ENCODE measurements at regions of chr9 and their contacts with region 1.

Region 1: GRCh38 chr9:116737152-116737546 is 50.0 kb downstream of the TRIM32 start:
- DNase-seq: peak; percentile 79 to 92
- ATAC-seq: peak; percentile 87 to 98
- H3K4me3 ChIP-seq: no peak overlapping the region
- H3K27ac ChIP-seq: no peak overlapping the region
- H3K4me1 ChIP-seq: no peaks in the 10 kb centered on the region
- CTCF ChIP-seq: peak; percentile 91
- EP300 ChIP-seq: no peak
- POLR2A ChIP-seq: no peak
- RAD21 ChIP-seq: peak; percentile 93

Region 2: GRCh38 chr9:116414374-116414773 is 322.8 kb before region 1 on chr9:
- CTCF ChIA-PET with region 1: no interaction called
- POLR2A ChIA-PET with region 1: no interaction called
- DNase-seq: no peak
- ATAC-seq: no peak
- H3K4me3 ChIP-seq: no peak overlapping the region
- H3K27ac ChIP-seq: no peak overlapping the region
- H3K4me1 ChIP-seq: no peaks in the 10 kb centered on the region
- CTCF ChIP-seq: no peak
- EP300 ChIP-seq: no peak
- POLR2A ChIP-seq: no peak
- RAD21 ChIP-seq: no peak

Region 3: DNA sequence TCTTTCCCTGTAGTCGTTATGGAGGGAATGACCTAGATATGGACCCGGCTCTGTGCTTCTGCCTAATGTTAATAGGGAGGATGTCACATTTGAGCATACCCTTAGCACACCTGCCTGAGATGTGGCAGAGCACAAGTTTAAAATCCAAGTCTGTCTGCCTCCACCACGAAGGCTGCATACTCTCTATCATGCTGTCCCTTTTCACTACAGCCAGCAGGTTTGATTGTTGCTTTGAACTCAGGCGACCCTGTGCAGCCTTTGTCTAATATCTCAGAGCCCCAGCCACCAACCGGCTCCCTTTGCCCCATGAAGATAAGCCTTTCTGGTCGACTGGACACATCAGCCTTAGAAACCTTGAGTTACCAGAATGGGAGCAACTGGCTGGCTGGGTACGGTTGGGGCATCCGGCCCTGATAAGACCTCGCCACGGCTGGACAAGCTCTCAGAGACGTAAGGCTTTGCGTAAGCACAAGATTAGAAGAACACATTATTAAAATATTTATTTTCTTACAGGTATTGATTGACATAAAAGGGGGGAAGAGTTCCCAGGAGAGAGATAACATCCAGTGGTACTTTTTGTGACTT is 272.1 kb before region 1 on chr9:
- CTCF ChIA-PET with region 1: no interaction called
- POLR2A ChIA-PET with region 1: no interaction called
- DNase-seq: no peak
- ATAC-seq: no peak
- H3K4me3 ChIP-seq: no peak overlapping the region
- H3K27ac ChIP-seq: no peak overlapping the region
- H3K4me1 ChIP-seq: no peaks in the 10 kb centered on the region
- CTCF ChIP-seq: no peak
- EP300 ChIP-seq: no peak
- POLR2A ChIP-seq: no peak
- RAD21 ChIP-seq: no peak

Region 4: GRCh38 chr9:116671605-116672004 is 65.5 kb before region 1 on chr9:
- CTCF ChIA-PET with region 1: no interaction called
- POLR2A ChIA-PET with region 1: no interaction called
- DNase-seq: no peak
- ATAC-seq: no peak
- H3K4me3 ChIP-seq: no peak overlapping the region
- H3K27ac ChIP-seq: no peak overlapping the region
- H3K4me1 ChIP-seq: 0 out of 3 replicates have a peak, but pooled peaks cover 3% of the 10 kb centered on the region
- CTCF ChIP-seq: no peak
- EP300 ChIP-seq: no peak
- POLR2A ChIP-seq: no peak
- RAD21 ChIP-seq: no peak

Region 5: DNA sequence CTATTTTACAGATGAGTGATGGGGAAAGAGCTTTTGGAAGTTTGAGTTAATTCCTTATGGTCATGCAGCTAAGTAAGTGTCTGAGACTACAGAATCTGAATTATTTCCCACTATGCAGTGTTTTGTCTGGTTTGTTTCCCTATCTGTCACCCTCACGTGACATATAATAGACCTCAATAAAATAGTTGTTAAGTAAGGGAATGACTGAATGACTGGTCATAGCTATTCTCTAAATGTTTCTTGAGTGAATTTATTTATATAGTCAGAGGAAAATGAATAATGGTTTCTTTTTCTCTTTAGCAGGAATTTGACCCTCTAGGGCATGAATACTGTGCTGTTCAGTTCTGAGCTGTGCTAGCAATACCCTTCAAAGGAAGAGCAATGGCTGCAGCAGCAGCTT is 39.8 kb before region 1 on chr9:
- CTCF ChIA-PET with region 1: interaction called, 11 read pairs
- POLR2A ChIA-PET with region 1: no interaction called
- DNase-seq: no peak
- ATAC-seq: no peak
- H3K4me3 ChIP-seq: no peak overlapping the region
- H3K27ac ChIP-seq: no peak overlapping the region
- H3K4me1 ChIP-seq: peaks cover 22% of the 10 kb centered on the region; the same call in 2 of the 3 replicates
- CTCF ChIP-seq: no peak
- EP300 ChIP-seq: no peak
- POLR2A ChIP-seq: no peak
- RAD21 ChIP-seq: no peak

Region 6: DNA sequence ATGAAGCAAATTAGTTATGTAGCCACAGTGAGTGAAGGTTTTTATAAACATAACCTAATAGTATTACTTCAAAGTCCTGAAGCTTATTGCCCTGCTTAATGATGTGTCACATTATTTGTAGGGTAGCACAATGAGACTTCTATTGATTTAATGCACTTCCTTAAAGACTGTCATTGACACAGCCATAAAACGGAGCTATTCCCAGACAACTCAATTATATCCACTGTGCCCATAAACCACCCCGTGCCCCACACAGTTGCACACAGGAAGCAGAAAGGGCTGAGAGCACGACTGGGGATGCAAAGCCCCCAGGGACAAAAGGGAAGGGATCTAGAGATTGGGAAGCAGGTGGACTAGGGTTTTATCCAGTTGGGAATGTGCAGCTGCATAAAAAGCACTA is 13.0 kb before region 1 on chr9:
- CTCF ChIA-PET with region 1: interaction called, 85 read pairs
- POLR2A ChIA-PET with region 1: no interaction called
- DNase-seq: no peak
- ATAC-seq: no peak
- H3K4me3 ChIP-seq: no peak overlapping the region
- H3K27ac ChIP-seq: no peak overlapping the region
- H3K4me1 ChIP-seq: no peaks in the 10 kb centered on the region
- CTCF ChIP-seq: no peak
- EP300 ChIP-seq: no peak
- POLR2A ChIP-seq: no peak
- RAD21 ChIP-seq: no peak

Region 7: DNA sequence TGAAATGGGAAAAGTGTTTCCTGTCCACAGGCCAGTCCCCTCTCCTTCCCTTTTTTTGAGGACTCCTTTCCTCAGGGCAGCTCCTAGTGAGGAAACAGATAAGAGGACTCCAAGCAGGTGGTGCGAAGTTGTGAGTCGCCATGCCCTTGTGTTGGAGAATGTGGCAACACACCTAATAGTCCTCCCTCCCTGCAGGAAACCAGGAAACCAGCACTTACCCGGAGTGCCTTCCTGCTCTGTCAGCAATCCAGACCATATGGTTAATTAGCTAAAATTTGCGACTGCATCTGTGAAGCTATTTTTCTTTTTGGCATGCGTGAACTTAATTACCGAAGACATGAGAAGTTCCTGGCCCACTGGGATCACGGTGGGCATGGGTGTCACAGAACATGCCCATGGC is 19.9 kb after region 1 on chr9:
- CTCF ChIA-PET with region 1: interaction called, 12 read pairs
- POLR2A ChIA-PET with region 1: no interaction called
- DNase-seq: no peak
- ATAC-seq: no peak
- H3K4me3 ChIP-seq: no peak overlapping the region
- H3K27ac ChIP-seq: no peak overlapping the region
- H3K4me1 ChIP-seq: no peaks in the 10 kb centered on the region
- CTCF ChIP-seq: no peak
- EP300 ChIP-seq: no peak
- POLR2A ChIP-seq: no peak
- RAD21 ChIP-seq: no peak

Region 8: DNA sequence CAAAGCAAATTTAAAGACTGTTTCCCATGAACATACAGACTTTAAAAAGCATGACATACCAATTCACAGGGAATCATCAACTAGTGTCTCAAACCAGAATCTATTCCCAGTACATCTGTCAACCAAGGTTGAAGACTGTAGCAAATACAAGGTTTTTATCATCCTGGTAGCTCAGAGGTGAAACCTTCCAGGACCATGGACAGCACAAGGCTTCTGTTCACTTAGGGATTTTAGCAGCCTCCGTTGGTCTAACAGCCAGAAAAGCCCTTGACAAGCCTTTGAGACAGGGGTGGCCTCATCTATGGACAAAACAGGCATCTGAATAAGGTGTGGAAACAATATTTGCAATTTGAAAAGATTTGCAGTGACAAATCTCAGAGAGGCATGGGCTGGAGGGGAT is 68.9 kb after region 1 on chr9:
- CTCF ChIA-PET with region 1: interaction called, 12 read pairs
- POLR2A ChIA-PET with region 1: no interaction called
- DNase-seq: peak in 1 of 2 experiments; percentile 8
- ATAC-seq: no peak
- H3K4me3 ChIP-seq: no peak overlapping the region
- H3K27ac ChIP-seq: no peak overlapping the region
- H3K4me1 ChIP-seq: no peaks in the 10 kb centered on the region
- CTCF ChIP-seq: no peak
- EP300 ChIP-seq: no peak
- POLR2A ChIP-seq: no peak
- RAD21 ChIP-seq: no peak

Measured in A549 (cell line).